IMR-90 (cell line): ENCODE measurements at regions of chr17 and their contacts with region 1.

Region 1: GRCh38 chr17:31373150-31374093 is 18.1 kb upstream of the RAB11FIP4 start:
- DNase-seq: peak; percentile 71
- ATAC-seq: peak; percentile 83
- H3K4me3 ChIP-seq: no peak overlapping the region
- H3K27ac ChIP-seq: no peak overlapping the region
- H3K4me1 ChIP-seq: peaks cover 4% of the 10 kb centered on the region
- H3K27me3 ChIP-seq: no peaks in the 10 kb centered on the region
- CTCF ChIP-seq: peak; percentile 69
- POLR2A ChIP-seq: no peak
- RAD21 ChIP-seq: peak; percentile 69

Region 2: DNA sequence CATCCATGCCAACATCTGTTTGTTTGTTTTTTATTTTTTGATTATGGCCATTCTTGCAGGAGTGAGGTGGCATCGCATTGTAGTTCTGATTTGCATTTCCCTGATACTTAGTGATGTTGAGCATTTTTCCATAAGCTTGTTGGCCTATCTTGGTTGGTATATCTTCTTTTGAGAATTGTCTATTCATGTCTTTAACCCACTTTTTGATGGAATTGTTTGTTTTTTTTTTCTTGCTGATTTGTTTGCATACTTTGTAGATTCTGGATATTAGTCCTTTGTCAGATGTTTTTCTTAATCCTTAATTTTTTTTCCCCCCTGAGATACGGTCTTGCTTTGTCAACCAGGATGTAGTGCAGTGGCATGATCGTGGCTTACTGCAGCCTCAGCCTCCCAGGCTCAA is 359.6 kb before region 1 on chr17:
- CTCF ChIA-PET with region 1: no interaction called
- POLR2A ChIA-PET with region 1: no interaction called
- dilution Hi-C with region 1: no loop called
- in situ Hi-C with region 1: no loop called
- intact Hi-C with region 1: loop called (anchors 5 kb)
- DNase-seq: no peak
- ATAC-seq: no peak
- H3K4me3 ChIP-seq: no peak overlapping the region
- H3K27ac ChIP-seq: no peak overlapping the region
- H3K4me1 ChIP-seq: no peaks in the 10 kb centered on the region; the same call in 1 of the 2 replicates
- H3K27me3 ChIP-seq: no peaks in the 10 kb centered on the region
- CTCF ChIP-seq: no peak
- POLR2A ChIP-seq: no peak
- RAD21 ChIP-seq: no peak

Region 3: DNA sequence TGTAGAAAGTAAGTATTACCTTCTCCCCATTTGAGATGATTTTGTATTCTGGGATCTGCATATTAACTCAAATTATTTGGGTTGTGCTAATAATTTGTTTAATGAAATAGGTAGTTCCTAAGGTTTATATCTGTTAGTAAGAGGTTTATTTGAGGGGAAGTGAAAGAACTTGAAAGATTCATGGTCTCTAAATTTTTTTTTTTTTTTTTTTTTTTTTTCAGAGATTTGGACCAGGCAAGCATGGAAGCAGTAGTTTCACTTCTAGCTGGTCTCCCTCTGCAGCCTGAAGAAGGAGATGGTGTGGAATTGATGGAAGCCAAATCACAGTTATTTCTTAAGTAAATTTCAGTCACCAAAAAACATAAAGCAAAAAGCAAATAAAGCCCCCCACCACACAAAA is 141.6 kb before region 1 on chr17:
- CTCF ChIA-PET with region 1: no interaction called
- POLR2A ChIA-PET with region 1: no interaction called
- dilution Hi-C with region 1: no loop called
- in situ Hi-C with region 1: no loop called
- intact Hi-C with region 1: no loop called
- DNase-seq: no peak
- ATAC-seq: no peak
- H3K4me3 ChIP-seq: no peak overlapping the region
- H3K27ac ChIP-seq: no peak overlapping the region
- H3K4me1 ChIP-seq: no peaks in the 10 kb centered on the region
- H3K27me3 ChIP-seq: no peaks in the 10 kb centered on the region
- CTCF ChIP-seq: no peak
- POLR2A ChIP-seq: no peak
- RAD21 ChIP-seq: no peak

Region 4: GRCh38 chr17:31251105-31251969 is 122.1 kb before region 1 on chr17:
- CTCF ChIA-PET with region 1: interaction called, 3 read pairs
- POLR2A ChIA-PET with region 1: no interaction called
- dilution Hi-C with region 1: no loop called
- in situ Hi-C with region 1: no loop called
- intact Hi-C with region 1: loop called (anchors 5 kb)
- DNase-seq: no peak
- ATAC-seq: no peak
- H3K4me3 ChIP-seq: no peak overlapping the region
- H3K27ac ChIP-seq: no peak overlapping the region
- H3K4me1 ChIP-seq: peaks cover 13% of the 10 kb centered on the region; the same call in 1 of the 2 replicates
- H3K27me3 ChIP-seq: no peaks in the 10 kb centered on the region
- CTCF ChIP-seq: no peak
- POLR2A ChIP-seq: no peak
- RAD21 ChIP-seq: no peak

Region 5: DNA sequence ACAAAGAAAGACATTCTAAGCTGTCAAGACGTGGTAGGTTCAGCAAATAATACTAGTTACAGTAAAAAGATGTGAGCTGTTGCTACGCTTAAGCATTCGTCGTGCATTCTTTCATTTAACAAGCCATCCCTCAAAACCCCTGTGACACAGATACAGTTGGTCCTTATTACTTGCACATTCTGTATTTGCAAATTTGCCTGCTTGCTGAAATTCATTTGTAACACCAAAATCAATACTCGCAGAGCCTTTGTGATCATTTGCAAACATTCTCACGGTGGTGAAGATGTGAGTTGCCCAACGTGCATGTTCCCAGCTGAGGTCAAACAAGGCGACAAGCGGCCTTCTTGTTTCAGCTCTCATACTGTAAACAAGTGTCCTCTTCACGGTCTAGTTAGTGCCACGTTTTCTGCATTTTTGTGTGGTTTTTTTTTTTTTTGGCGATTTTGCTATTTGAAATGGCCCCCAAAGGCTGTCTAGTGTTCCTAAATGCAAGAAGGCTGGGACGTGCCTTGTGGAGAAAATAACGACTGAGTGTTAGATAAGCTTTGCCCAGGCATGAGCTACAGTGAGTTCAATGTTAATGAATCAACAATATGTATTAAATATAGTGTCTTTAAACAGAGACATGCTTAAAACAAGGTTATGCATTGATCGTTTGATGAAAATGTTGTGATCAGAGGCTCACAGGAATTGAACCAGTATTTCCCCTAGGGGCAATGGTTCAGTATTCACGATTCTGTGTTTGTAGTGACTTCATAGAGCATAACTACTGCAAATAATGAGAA is 102.1 kb after region 1 on chr17:
- CTCF ChIA-PET with region 1: no interaction called
- POLR2A ChIA-PET with region 1: interaction called, 13 read pairs
- dilution Hi-C with region 1: no loop called
- in situ Hi-C with region 1: no loop called
- intact Hi-C with region 1: no loop called
- DNase-seq: no peak
- ATAC-seq: no peak
- H3K4me3 ChIP-seq: no peak overlapping the region
- H3K27ac ChIP-seq: no peak overlapping the region
- H3K4me1 ChIP-seq: no peaks in the 10 kb centered on the region
- H3K27me3 ChIP-seq: peaks cover 54% of the 10 kb centered on the region
- CTCF ChIP-seq: no peak
- POLR2A ChIP-seq: no peak
- RAD21 ChIP-seq: no peak

Region 6: GRCh38 chr17:31494259-31495021 is 121.0 kb after region 1 on chr17:
- CTCF ChIA-PET with region 1: no interaction called
- POLR2A ChIA-PET with region 1: no interaction called
- dilution Hi-C with region 1: no loop called
- in situ Hi-C with region 1: no loop called
- intact Hi-C with region 1: no loop called
- DNase-seq: no peak
- ATAC-seq: no peak
- H3K4me3 ChIP-seq: no peak overlapping the region
- H3K27ac ChIP-seq: no peak overlapping the region
- H3K4me1 ChIP-seq: no peaks in the 10 kb centered on the region
- H3K27me3 ChIP-seq: peaks cover 84% of the 10 kb centered on the region
- CTCF ChIP-seq: no peak
- POLR2A ChIP-seq: no peak
- RAD21 ChIP-seq: no peak